ENCODE measurements at regions of chr1 and their contacts with region 1.

Region 1: GRCh38 chr1:145906954-145907753 is 2.7 kb downstream of the ITGA10 start:
- DNase-seq: no peak
- H3K4me3 Mint-ChIP-seq: no peak overlapping the region
- H3K27ac Mint-ChIP-seq: no peak overlapping the region
- H3K4me1 Mint-ChIP-seq: peaks cover 2% of the 10 kb centered on the region
- H3K27me3 Mint-ChIP-seq: no peaks in the 10 kb centered on the region

Region 2: DNA sequence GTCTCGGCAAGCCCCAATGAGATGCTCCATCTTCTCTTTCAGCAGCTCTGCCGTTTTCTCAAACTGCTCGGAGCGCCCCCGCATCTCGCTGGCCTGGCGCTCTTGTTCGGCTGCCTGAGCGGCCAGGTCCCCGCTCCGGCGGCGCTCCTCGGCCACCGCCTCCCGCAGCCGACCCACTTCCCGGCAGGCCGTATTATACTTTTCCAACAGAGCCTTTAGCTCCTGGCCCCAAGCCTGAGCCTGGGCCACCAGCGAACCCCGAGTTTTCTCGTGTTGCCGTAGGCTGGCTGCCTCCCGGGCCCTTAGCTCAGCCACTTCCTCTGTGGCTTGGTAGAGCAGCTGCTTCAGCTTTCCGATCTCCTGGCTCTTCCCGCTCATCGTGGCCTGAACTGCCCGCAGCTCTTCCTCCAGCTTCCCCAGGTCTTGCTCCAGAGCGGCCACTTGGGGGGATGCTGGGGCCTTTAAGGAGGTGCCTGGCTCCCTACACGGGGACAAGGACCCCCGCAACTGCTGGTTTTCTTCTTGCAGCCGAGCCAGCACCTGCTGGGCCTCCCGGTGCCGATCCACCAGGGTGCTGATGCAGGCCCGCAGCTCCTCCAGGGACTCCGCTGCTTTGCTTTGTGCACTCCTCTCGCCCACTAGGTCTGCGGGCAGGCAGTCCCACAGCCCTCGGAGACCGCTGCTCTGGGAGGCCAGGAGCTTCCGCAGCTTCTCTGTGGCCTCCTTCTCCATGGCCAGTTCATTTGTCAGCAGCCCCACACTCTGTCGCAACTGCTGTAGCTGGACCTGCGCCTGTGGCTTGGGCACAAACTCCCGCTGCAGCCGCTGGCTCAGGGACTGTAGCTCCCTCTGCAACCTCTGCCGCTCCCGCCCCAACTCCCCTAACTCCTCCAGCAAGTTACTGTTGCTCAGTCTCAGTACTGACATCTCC is 34.9 kb before region 1 on chr1:
- CTCF ChIA-PET with region 1: interaction called, 10 read pairs
- POLR2A ChIA-PET with region 1: no interaction called
- intact Hi-C with region 1: no loop called
- DNase-seq: peak; percentile 50
- H3K4me3 Mint-ChIP-seq: peak overlapping the region; percentile 70
- H3K27ac Mint-ChIP-seq: no peak overlapping the region
- H3K4me1 Mint-ChIP-seq: peaks cover 14% of the 10 kb centered on the region
- H3K27me3 Mint-ChIP-seq: no peaks in the 10 kb centered on the region